ENCODE measurements at regions of chr16 and their contacts with region 1.

Region 1: GRCh38 chr16:88936556-88937205 is 40.3 kb downstream of the CBFA2T3 start:
- H3K4me3 Mint-ChIP-seq: peak overlapping the region; percentile 72
- H3K27ac Mint-ChIP-seq: peak overlapping the region; percentile 98
- H3K4me1 Mint-ChIP-seq: peaks cover 64% of the 10 kb centered on the region
- H3K27me3 Mint-ChIP-seq: peaks cover 24% of the 10 kb centered on the region

Region 2: GRCh38 chr16:88922114-88922822 is 14.4 kb before region 1 on chr16:
- intact Hi-C with region 1: loop called (anchors 2 kb)
- H3K4me3 Mint-ChIP-seq: peak overlapping the region; percentile 39
- H3K27ac Mint-ChIP-seq: peak overlapping the region; percentile 85
- H3K4me1 Mint-ChIP-seq: peaks cover 61% of the 10 kb centered on the region
- H3K27me3 Mint-ChIP-seq: peaks cover 9% of the 10 kb centered on the region

Region 3: GRCh38 chr16:88983771-88984687 is 47.3 kb after region 1 on chr16:
- intact Hi-C with region 1: no loop called
- H3K4me3 Mint-ChIP-seq: no peak overlapping the region
- H3K27ac Mint-ChIP-seq: no peak overlapping the region
- H3K4me1 Mint-ChIP-seq: peaks cover 23% of the 10 kb centered on the region
- H3K27me3 Mint-ChIP-seq: peaks cover 72% of the 10 kb centered on the region

Measured in dendritic cell treated with granulocyte-macrophage colony-stimulating factor and Interleukin-4, amounts not matched to agents 40 ng/mL and 50 ng/mL, for 4 days (primary cell).